Tibial artery (tissue), 4 donors: ENCODE measurements at regions of chr2 and their contacts with region 1.

Region 1: DNA sequence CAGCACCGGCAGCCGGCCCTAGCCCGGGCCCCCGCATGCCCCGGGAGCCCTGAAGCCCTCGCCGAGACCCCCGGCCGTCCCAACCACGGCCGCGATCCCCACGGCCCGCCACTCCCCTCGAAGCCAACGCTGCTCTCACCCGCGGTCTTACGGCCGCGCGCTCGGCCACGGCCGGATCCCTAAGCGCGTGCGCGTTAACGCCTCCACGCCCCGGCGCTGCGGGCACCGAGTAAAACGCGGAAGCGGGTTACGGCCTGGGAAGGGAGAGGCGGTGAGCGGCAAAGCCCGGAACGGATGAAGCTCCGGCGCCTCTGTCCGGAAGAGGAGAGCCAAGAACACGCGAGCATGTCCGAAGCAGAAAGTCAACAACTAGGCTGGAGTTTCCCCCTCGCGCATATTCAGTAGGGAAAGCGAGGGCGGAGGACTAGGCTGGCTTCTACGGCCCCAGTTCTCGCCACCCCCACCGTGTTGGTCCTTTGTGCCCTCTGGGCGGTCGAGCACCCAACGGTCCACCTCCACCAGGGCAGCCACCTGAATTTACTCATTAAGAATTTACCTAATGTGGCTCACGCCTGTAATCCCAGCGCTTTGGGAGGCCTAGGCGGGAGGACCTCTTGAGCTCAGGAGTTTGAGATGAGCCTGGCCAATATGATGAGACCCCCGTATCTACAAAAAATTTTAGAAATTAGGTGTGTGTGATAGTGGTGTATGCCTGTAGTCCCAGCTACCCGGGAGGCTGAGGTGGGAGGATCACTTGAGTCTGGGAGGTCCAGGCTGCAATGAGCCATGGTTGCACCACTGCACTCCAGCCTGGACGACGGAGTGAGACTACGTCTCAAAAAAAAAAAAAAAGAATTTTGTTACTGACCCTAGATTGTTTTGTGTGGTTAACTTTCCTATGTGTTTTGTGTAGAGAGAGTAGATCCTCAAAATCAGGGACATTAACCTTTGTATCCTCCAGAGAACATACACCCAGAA is at the start of gene KANSL3:
- DNase-seq: peak; percentile 84 to 93
- H3K4me3 ChIP-seq: peak within 1 kb of the TSS; percentile 65 to 82
- H3K27ac ChIP-seq: peak within 1 kb of the TSS; percentile 80 to 98
- H3K4me1 ChIP-seq: peaks cover 0 to 41% (median 28%) of the 10 kb centered on the region in 4 donors
- H3K27me3 ChIP-seq: peaks cover 0 to 3% of the 10 kb centered on the region in 2 donors
- CTCF ChIP-seq: peak in 1 of 2 experiments; percentile 27

Region 2: DNA sequence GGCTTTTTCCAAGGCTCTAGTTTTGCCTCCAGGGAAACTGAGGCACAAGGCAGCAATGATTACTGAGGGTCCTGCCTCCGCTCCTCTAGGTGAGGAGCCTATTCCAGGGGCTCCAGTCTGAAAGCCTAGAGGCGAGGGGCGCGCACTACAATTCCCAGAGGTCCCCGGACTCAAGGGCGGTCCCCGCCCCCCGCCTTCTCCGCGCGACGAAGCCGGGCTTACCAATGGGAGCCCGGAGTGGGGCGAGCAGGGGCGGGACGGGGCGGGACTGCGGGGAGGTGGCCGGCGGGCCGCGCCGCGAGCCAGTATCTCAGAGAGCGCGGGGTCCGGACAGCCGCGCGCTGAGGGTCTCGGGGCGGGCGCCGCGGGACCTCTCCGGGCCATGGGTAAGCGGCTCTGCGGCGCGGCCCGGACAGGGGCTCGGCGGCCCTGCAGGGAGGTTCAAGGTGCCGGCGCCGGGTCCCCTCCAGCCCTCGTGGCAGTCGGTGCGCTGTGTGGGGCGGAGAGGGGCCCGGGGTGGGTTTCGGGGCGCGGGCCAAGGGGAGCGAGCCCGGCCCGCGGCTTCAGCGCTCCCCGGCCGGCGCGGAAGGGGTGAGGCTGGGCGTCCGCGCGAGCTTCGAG is 101.9 kb before region 1 on chr2 and contains the start of gene ARID5A:
- intact Hi-C with region 1: loop called (anchors 10 kb)
- DNase-seq: peak; percentile 94 to 97
- H3K4me3 ChIP-seq: peak within 1 kb of the TSS; percentile 79 to 88
- H3K27ac ChIP-seq: peak within 1 kb of the TSS; percentile 94 to 97
- H3K4me1 ChIP-seq: peaks cover 10 to 83% (median 75%) of the 10 kb centered on the region in 4 donors
- H3K27me3 ChIP-seq: no peaks in the 10 kb centered on the region
- CTCF ChIP-seq: peak; percentile 55 to 60

Region 3: GRCh38 chr2:96602330-96602823 is 36.1 kb before region 1 on chr2:
- intact Hi-C with region 1: no loop called
- DNase-seq: no peak
- H3K4me3 ChIP-seq: no peak overlapping the region
- H3K27ac ChIP-seq: no peak overlapping the region
- H3K4me1 ChIP-seq: no peaks in the 10 kb centered on the region
- H3K27me3 ChIP-seq: no peaks in the 10 kb centered on the region
- CTCF ChIP-seq: no peak

Region 4: DNA sequence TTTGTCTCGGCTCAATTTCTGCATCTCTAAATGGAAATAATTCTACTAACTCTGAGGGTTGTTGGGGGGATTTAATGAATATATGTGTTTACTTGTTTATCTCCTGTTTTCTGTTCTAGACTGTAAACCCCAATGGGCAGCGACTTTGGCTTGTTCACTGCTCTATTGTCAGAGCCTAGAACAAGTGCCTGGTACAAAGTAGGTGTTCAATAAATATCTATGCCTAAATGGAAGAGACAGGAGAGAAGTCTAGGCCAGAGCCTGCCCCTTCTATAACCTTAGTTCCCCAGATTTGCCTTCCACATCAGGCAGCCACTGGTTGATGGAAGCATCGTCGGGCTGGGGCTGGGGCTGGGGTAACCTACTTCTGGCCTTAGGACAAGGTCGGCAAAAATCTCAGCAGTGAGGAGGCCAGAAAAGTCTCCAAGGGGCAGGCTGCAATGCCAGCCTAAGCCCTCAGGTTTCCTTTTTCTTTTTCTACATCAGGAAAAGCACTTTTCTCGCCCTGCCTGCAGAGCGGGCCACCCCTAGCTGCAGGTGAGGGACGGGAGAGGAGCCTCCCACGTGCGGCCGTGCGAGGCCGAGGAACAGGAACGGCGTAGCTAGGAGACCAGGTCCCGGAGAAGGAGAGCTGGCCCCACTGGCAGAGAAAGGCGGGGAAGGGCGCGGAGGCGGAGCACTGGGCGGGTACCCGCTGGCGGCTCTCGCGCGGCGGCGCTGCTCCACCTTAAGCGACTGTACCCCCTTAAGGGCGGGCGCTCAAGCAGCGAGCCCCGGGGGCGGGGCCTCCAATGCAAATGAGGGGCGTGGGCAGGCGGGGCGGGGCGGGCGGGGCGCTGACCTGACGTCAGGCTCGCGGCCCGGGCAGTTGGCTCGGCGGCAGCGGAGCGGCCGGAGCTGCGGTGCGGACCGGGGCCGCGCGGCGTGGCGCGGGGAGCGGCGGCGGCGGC is 121.9 kb after region 1 on chr2 and contains the start of gene CNNM4:
- intact Hi-C with region 1: loop called (anchors 5 kb)
- DNase-seq: peak; percentile 92 to 97
- H3K4me3 ChIP-seq: peak within 1 kb of the TSS; percentile 62 to 78
- H3K27ac ChIP-seq: peak within 1 kb of the TSS; percentile 82 to 83
- H3K4me1 ChIP-seq: peaks cover 0 to 45% (median 37%) of the 10 kb centered on the region in 4 donors
- H3K27me3 ChIP-seq: no peaks in the 10 kb centered on the region
- CTCF ChIP-seq: no peak

Region 5: DNA sequence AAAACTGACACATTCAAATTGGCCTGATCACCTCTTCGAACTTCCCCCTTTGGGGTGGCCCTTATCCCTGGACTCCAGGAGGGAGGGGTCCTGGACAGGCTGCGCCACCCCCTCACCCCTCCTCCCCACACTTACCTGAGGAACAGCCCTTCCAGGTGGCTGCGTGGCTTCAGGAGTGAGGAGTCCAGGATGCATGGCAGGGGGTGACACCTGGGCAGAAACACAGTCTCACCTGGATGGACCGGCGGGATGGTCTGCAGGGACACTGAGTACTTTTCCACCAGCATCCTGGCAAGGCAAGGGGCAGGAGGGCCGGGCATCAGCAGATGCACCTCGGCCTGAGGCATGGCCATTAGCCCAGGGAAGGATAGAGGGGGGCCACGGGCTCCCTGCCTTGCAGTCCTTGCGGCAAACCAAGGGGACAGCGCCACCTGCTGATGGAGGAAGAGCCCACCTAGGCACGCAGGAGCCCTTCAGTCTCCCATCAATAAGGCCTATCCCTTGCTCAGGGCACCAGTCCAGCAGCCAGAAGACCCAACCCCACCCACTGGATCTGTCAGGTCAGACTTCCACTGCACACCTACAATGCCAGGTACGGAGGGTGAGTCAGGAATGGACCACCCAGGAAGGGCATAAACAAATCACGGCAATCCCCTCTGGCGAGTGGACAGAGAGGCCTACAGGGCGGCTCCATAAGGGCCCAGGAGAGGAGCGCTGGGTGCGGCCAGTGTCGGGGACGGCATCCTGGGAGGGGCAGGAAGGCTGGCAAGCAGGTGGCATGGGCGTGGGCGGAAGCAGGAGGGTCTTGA is 321.9 kb after region 1 on chr2:
- intact Hi-C with region 1: loop called (anchors 10 kb)
- DNase-seq: peak; percentile 80 to 88
- H3K4me3 ChIP-seq: no peak overlapping the region
- H3K27ac ChIP-seq: no peak overlapping the region
- H3K4me1 ChIP-seq: peaks cover 0 to 3% (median 0%) of the 10 kb centered on the region in 4 donors
- H3K27me3 ChIP-seq: no peaks in the 10 kb centered on the region
- CTCF ChIP-seq: peak; percentile 82 to 86